GM18951 (cell line): ENCODE measurements at regions of chr7 and their contacts with region 1.

Region 1: DNA sequence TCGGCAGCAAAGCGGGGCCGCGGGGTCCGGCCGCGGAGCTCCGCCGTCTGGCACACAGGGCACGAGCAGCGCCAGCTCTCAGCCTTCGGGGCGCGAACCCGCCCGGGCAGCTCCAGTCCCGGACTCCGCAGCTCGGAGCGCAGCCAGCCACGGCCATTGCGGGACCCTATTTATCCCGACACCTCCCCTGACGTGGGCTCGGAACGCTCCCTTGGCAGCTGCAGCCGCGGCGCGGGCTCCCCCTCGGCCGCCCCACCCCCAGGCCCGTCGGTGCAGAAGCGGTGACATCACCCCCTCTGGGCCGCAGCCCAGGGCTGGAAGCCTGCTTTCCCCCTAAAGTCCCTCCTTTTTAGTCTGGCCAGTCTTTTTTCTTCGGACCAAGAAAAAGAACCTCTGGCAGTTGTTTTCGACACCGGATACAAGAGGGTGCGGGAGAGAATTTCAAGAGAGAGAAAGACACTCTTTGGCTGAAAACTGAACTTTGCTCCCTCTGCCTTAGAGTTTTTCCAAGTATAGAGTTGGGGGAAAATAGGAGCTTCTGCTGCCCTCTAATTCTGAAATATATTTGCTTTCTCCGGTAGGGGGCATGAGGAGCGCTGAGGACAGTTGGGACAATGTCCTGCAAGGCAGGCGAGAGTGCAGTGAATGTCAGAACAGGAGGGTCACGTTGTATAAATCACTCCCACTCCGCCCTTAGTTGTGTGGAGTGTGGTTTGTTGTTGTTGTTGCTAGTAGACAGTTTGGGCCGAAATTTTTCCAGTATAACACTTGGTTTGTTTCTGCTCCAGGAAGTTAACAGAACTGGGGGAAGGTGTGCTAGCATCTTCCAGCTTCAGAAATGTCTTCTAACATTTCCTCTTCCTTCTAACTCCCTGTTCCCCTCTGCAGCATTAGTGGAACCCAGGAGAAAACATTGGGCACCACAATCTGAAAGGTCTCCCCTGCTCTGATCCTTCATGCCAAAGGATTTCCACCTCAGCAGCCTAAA is at the start of gene SFRP4:
- POLR2A ChIP-seq: no peak

Region 2: GRCh38 chr7:37141742-37142141 is 775.2 kb before region 1 on chr7:
- in situ Hi-C with region 1: no loop called
- POLR2A ChIP-seq: no peak

Region 3: DNA sequence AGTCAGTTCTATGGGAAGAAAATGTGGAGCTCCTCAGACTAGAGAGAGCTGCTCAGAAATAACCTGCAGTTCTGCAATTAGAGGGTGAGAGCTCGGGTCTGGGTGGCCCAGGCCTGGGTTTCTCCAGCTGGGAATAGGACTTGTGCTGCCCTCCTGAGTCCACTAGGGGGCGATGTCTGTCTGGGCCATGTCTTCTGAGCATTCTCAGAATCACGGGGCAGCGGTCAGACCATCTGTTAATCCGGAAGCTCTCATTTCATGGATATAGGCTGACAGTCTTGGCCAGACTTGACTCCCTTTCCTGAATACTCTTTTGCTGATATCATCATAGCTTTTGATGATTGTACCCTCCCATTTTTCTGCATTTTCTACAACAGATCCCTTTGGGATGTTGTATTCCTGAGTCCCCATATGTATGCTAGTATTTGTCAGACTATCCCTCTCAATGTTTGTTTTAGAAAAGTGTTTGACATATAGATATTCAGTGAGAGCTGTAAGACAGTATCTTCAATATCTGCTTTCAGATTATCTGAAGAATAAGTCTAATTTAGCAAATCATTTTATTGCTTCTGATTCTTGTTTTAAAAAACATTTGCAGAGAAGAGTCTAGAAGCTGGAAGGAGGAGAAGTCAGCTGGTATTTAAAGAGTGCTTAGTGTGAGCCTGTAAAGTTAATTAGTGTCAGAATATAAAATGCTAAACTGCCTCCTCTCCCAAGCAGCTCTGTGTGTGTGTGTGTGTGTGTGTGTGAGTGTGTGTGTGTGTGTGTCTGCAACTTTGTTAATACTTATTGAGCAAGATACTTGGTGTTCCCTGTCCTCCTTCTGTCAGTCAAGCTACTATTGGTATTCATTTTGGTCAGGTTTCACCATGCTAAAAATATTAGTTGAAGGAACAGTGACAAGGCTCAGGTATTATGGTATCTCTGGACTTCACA is 299.0 kb after region 1 on chr7:
- in situ Hi-C with region 1: loop called (anchors 25 kb)
- POLR2A ChIP-seq: no peak

Region 4: GRCh38 chr7:38335492-38336147 is 418.7 kb after region 1 on chr7:
- in situ Hi-C with region 1: loop called (anchors 25 kb)
- POLR2A ChIP-seq: peak; percentile 21